ENCODE measurements at regions of chr7 and their contacts with region 1.

Region 1: DNA sequence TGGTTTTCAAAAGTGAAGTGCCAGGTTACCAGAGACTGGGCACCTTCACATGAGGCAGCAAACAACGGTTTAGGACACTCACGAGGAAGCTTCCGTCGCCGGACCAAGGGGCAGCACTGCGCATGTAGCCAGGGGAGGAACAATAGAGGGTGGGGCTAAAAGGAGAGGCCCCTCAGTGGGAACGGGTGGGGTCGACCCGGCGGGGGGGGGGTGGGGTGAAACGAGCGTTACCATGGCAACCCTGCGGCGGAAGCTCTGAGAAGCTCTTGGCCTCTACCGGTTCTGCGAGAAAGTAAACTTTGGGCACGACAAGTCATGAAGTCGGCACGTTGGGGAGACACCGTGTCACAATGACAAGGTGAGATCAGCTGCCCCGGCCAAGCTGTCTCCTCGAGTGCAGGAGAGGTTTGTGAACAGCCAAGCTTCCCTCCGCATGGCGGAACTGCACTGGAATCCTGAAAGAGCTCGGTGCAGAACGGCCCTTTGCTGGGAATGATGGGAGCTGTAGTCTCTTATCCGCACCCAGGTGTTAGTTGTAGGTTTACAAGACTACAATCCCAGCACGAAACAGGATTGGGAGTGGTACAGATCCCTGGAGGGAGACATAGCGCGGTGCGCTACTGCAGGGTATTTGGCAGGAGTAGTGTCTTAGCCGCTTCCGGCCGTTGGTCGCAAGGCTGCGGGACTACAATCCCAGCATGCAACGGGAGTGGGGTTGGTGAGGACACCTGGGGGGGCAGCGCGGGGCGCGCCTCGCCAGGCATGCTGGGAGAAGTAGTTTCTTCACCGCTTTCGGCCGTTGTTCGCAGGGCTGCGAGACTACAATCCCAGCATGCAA is 72.8 kb upstream of the ZNF722 start:
- DNase-seq: peak; percentile 88 to 96
- ATAC-seq: peak; percentile 97 to 100 (median 99)
- H3K4me3 ChIP-seq: peak overlapping the region; percentile 47 to 82 (median 66)
- H3K27ac ChIP-seq: peak overlapping the region; percentile 73 to 95 (median 90)
- H3K4me1 ChIP-seq: peaks cover 0 to 14% (median 6%) of the 10 kb centered on the region in 9 donors
- H3K27me3 ChIP-seq: no peaks in the 10 kb centered on the region
- CTCF ChIP-seq: no peak

Region 2: GRCh38 chr7:63900394-63901203 is 25.2 kb before region 1 on chr7:
- intact Hi-C with region 1: loop called in 4 of 10 experiments (anchors 1 kb)
- DNase-seq: peak; percentile 88 to 98
- ATAC-seq: peak; percentile 99 to 100 (median 99)
- H3K4me3 ChIP-seq: peak overlapping the region; percentile 51 to 86 (median 70)
- H3K27ac ChIP-seq: peak overlapping the region in 8 of 10 donors; percentile 1 to 62 (median 34)
- H3K4me1 ChIP-seq: peaks cover 0 to 12% (median 0%) of the 10 kb centered on the region in 9 donors
- H3K27me3 ChIP-seq: no peaks in the 10 kb centered on the region
- CTCF ChIP-seq: peak in 2 of 9 donors; percentile 3 to 18

Region 3: GRCh38 chr7:63968629-63969028 is 42.8 kb after region 1 on chr7:
- intact Hi-C with region 1: no loop called
- DNase-seq: no peak
- ATAC-seq: no peak
- H3K4me3 ChIP-seq: no peak overlapping the region
- H3K27ac ChIP-seq: no peak overlapping the region
- H3K4me1 ChIP-seq: no peaks in the 10 kb centered on the region
- H3K27me3 ChIP-seq: no peaks in the 10 kb centered on the region
- CTCF ChIP-seq: no peak

Region 4: DNA sequence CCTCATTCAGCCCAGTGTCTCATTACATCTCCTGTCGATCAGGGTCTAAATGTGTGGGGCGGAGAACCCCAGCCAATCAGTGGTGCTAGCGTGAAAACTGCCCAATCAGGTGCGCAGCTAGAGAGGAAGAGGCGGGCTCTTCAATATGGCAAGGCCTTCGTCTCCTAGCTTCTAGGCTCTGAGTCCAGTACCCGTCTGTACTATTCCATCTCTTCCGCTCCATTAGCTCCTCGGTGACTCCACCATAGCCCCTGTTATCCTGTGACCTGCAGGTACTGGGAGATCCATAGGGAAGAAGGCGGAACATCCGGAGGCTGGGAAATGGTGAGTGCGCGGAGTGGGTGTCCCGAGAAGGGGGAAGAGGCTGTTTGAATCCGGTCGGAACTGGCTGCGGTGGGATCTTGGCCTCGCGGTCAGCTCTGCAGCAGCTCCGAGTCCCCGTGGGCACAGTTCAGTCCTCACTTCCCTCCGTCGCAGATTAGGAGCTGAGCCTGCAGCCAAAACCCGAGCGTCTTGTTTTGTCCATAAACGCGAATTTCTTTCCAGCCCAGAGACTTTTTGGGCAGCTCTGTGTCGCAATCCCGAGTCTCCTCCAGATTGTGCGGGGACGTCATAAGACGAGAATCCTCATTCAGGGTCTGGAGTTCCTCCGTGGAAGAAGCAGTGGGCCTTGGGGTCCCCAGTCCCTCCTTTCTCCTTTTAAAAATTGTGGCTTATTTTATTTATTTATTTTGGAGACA is 119.6 kb after region 1 on chr7 and contains the start of gene ZNF727:
- intact Hi-C with region 1: loop called in 1 of 10 experiments (anchors 10 kb)
- DNase-seq: peak; percentile 65 to 84
- ATAC-seq: peak; percentile 95 to 100 (median 98)
- H3K4me3 ChIP-seq: peak within 1 kb of the TSS; percentile 52 to 75 (median 62)
- H3K27ac ChIP-seq: peak within 1 kb of the TSS; percentile 31 to 88 (median 84)
- H3K4me1 ChIP-seq: peaks cover 0 to 10% (median 0%) of the 10 kb centered on the region in 9 donors
- H3K27me3 ChIP-seq: no peaks in the 10 kb centered on the region
- CTCF ChIP-seq: no peak
- total RNA-seq, gene ZNF727: 1.4 to 5.1 (median 2.5) TPM

Region 5: DNA sequence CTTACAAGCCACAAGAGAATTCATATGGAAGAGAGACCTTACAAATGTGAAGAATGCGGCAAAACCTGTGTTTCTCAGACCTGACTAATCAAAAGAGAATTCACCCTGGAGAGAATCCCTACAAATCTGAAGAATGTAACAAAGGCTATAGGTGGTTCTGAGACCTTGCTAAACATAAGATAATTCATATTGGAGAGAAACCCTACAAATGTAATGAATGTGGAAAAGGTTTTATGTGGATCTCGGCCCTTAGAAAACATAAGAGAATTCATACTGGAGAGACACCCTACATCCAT is 152.8 kb after region 1 on chr7:
- intact Hi-C with region 1: no loop called
- DNase-seq: no peak
- ATAC-seq: no peak
- H3K4me3 ChIP-seq: no peak overlapping the region
- H3K27ac ChIP-seq: no peak overlapping the region
- H3K4me1 ChIP-seq: no peaks in the 10 kb centered on the region
- H3K27me3 ChIP-seq: no peaks in the 10 kb centered on the region
- CTCF ChIP-seq: no peak

Region 6: DNA sequence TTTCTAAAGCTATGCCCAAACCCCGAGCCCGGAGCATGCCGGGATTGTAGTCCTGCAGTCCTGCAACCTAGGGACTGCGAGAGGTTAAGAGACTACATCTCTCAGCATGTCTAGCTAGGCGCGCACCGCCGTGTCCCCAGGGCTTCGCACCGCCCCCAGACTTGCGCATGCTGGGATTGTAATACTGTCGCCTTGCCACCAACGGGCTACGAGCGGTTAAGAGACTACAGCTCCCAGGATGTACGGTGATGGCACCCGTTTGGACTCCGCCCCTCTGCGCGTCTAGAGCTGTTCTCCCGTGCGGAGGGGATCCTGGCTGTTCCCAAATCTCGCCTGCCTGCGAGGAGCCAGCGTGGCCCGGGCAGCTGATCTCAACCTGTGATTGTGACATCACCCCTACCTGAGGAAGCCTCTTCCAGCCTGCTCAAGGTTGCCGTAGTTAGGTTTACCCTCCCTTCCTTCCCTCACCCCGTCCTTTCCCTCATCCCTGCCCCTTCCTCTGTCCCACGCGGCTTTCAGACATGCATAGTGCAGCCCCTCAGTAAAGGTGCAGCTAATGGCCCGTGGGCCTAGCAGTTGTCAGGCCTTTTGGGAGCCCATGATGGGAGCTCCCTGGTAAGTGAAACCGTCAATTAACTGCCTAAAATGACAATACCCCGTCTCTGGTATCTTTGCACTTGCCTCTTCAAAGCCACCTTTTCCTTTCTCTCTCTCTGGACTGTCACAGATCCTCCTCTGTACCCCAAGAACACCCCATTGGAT is 381.6 kb after region 1 on chr7:
- intact Hi-C with region 1: loop called in 2 of 10 experiments (anchors 10 kb)
- DNase-seq: peak; percentile 91 to 92
- ATAC-seq: peak; percentile 96 to 100 (median 98)
- H3K4me3 ChIP-seq: peak overlapping the region; percentile 27 to 68 (median 62)
- H3K27ac ChIP-seq: peak overlapping the region; percentile 54 to 91 (median 81)
- H3K4me1 ChIP-seq: peaks cover 0 to 15% (median 6%) of the 10 kb centered on the region in 9 donors
- H3K27me3 ChIP-seq: no peaks in the 10 kb centered on the region
- CTCF ChIP-seq: peak in 1 of 9 donors; percentile 24

Region 7: DNA sequence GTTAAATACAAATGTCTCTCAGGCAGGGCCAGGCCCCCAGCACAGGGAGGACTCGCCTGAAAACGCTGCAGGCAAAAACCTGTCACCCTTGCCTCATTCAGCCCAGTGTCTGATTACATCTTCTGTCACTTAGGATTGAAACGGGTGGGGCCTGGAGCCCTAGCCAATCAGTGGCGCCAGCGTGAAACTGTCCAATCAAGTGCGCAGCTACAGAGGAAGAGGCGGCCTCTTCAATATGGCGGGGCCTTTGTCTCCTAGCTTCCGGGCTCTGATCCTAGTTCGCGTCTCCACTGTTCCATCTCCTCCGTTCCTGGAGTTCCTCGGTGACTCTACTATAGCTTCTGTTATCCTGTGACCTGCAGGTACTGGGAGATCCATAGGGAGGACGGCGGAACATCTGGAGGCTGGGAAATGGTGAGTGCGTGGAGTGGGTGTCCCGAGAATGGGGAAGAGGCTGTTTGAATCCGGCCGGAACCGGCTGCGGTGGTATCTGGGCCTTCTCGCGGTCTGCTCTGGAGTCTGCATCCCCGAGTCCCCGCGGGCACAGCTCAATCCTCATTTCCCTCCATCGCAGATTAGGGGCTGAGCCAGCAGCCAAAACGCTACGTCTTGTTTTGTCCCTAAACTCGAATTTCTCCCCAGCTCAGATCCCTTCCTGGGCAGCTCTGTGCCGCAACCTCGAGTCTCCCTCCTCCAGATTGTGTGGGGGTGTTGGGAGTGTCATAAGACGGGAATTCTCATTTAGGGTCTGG is 388.1 kb after region 1 on chr7 and contains the start of gene ZNF736:
- intact Hi-C with region 1: loop called in 2 of 10 experiments (anchors 10 kb)
- DNase-seq: peak; percentile 85 to 92
- ATAC-seq: peak; percentile 99 to 100 (median 100)
- H3K4me3 ChIP-seq: peak within 1 kb of the TSS; percentile 58 to 93 (median 80)
- H3K27ac ChIP-seq: peak within 1 kb of the TSS in 9 of 10 donors; percentile 42 to 92 (median 68)
- H3K4me1 ChIP-seq: peaks cover 3 to 26% (median 19%) of the 10 kb centered on the region in 9 donors
- H3K27me3 ChIP-seq: no peaks in the 10 kb centered on the region
- CTCF ChIP-seq: no peak
- total RNA-seq, gene ZNF736: 4.4 to 8.4 (median 6.4) TPM

Measured in heart right ventricle (tissue), 16 donors.